ENCODE measurements at regions of chr7 and their contacts with region 1.

Region 1: DNA sequence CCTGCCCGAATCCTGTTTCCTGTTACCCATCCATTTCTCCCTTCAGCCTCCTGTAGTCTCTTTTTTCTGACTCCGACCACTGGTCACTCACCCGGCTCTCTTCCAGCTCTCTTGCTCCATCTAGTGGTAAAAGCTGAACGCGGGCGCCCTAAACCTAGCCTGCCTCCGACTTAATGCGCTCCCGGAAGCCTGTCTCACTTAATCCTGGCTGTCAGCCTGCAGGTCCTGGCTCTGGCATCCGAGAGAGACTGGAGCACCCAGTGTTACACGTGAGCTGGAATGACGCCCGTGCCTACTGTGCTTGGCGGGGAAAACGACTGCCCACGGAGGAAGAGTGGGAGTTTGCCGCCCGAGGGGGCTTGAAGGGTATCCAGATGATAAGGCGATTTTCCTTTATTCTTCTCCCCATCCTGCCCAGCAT is 10.3 kb downstream of the SUMF2 start:
- DNase-seq: peak in 9 of 10 donors; percentile 49 to 84 (median 70)
- H3K4me3 ChIP-seq: peak overlapping the region in 1 of 59 donors; percentile 27
- H3K27ac ChIP-seq: peak overlapping the region in 38 of 59 donors; percentile 3 to 71 (median 40)
- H3K27me3 ChIP-seq: no peaks in the 10 kb centered on the region
- CTCF ChIP-seq: peak; percentile 76 to 95 (median 90)

Region 2: DNA sequence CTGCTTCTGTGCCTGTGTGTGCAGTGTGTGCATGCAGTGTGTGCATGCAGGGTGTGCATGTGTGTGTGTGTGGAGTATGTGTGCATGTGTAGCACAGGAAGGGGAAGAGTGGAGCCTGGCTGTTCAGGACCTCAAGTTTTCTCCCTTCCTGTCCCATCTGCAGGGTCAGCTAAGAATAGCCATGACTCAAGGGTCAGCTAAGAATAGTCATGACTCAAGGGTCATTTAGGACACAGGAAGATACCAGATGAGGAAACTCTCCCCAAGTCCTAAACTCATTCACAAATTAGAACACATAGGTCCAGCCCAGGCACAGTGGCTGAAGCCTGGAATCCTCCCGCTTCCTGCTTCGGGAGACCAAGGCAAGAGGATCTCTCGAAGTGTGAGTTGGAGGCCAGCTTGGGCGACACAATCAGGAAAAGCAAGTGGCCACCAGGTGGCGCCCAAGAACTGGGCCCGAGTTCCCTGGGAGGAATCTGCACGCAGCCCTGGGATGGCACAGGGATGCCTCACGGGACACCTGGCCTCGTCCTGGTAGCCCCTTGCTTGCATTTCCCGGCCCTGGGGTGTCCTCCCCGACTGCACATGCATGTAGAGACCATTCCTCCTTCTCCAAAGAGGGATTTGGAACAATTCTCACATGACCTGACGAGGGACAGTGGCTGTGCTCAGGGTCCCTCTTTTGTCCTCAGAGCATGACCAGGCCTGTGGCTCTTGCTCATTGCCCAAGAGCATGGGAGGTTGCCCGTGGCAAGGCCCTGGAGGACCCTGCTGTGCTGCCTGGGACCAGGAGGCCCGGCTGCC is 480.7 kb before region 1 on chr7:
- intact Hi-C with region 1: loop called in 1 of 2 experiments (anchors 10 kb)
- DNase-seq: peak in 7 of 10 donors; percentile 22 to 74 (median 52)
- H3K4me3 ChIP-seq: no peak overlapping the region
- H3K27ac ChIP-seq: no peak overlapping the region
- H3K27me3 ChIP-seq: peaks cover 0 to 4% (median 0%) of the 10 kb centered on the region in 45 donors
- CTCF ChIP-seq: peak; percentile 53 to 88 (median 72)

Region 3: DNA sequence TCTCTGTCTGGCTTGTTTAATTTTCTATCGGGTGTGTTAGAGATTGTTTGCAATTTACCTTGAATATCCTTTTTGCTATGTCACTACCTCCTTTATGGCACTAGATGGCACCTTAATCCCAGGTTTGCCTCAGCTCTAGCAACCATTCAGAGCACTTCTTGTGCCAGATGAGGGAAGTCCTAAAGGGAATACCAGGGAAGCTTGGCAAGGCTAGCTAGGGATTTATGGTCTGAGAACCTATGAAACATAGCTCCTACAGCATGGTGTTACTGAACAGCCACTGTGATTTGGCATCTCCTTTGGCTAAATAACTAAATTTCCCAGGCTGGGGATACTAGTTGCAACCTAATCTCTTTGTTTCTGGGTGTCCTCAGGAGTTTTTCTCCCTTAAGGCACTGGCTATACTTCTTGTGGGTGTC is 433.1 kb before region 1 on chr7:
- intact Hi-C with region 1: loop called (anchors 5 kb)
- DNase-seq: peak in 2 of 10 donors; percentile 29 to 36
- H3K4me3 ChIP-seq: no peak overlapping the region
- H3K27ac ChIP-seq: no peak overlapping the region
- H3K27me3 ChIP-seq: peaks cover 0 to 2% (median 0%) of the 10 kb centered on the region in 45 donors
- CTCF ChIP-seq: peak; percentile 22 to 85 (median 66)

Region 4: DNA sequence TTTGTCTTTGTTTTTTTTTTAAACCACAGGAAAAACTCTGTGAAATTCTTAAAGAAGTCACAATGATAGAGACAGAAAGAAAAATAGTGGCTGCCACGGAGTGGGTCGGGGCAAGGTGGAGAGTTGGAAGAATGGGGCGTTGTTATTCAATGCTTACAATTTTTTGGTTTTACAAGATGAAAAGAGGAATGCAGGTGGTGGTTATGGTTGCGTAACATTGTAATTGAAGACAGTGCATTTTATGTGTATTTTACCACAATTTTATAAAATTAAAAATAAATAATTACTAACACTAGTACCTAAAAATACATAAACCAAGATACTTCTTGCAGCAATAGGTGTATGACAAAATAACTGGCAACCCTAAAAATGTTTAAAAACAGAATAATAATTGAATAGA is 425.1 kb before region 1 on chr7:
- intact Hi-C with region 1: loop called in 1 of 2 experiments (anchors 5 kb)
- DNase-seq: no peak
- H3K4me3 ChIP-seq: no peak overlapping the region
- H3K27ac ChIP-seq: no peak overlapping the region
- H3K27me3 ChIP-seq: peaks cover 0 to 7% (median 0%) of the 10 kb centered on the region in 45 donors
- CTCF ChIP-seq: no peak

Region 5: DNA sequence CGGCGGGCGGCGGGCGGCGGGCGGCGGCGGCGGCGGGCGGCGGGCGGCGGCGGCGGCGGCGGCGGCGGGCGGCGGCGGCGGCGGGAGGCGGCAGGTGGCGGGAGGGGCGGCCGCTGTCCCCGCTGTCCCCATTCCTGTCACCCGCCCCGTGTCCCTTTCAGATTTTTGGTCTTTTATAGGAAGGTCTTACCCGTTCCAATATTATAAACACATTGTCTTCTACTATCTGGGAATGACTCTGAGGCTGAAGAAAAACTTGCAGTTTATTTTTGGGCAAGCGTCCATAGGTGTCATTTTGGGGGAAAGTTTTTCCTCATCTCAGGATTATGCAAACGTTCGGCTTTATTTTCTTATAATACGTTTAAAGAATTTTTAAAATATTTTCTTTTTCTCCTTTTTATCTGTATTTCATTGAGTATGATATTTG is 186.5 kb before region 1 on chr7:
- intact Hi-C with region 1: loop called in 1 of 2 experiments (anchors 10 kb)
- DNase-seq: peak in 1 of 10 donors; percentile 15
- H3K4me3 ChIP-seq: peak overlapping the region; percentile 33 to 90 (median 64)
- H3K27ac ChIP-seq: peak overlapping the region in 49 of 59 donors; percentile 22 to 88 (median 75)
- H3K27me3 ChIP-seq: no peaks in the 10 kb centered on the region
- CTCF ChIP-seq: no peak

Measured in dorsolateral prefrontal cortex (tissue), 120 donors.